ENCODE measurements at regions of chr16 and their contacts with region 1.

Region 1: GRCh38 chr16:26598061-26598460 is 468.7 kb upstream of the C16orf82 start:
- DNase-seq: peak; percentile 86
- H3K4me3 Mint-ChIP-seq: peak overlapping the region; percentile 17
- H3K27ac Mint-ChIP-seq: peak overlapping the region; percentile 82
- H3K4me1 Mint-ChIP-seq: peaks cover 48% of the 10 kb centered on the region
- H3K27me3 Mint-ChIP-seq: peaks cover 17% of the 10 kb centered on the region

Region 2: GRCh38 chr16:26614237-26614841 is 16.3 kb after region 1 on chr16:
- CTCF ChIA-PET with region 1: no interaction called
- intact Hi-C with region 1: loop called (anchors 2 kb)
- DNase-seq: no peak
- H3K4me3 Mint-ChIP-seq: peak overlapping the region; percentile 11
- H3K27ac Mint-ChIP-seq: peak overlapping the region; percentile 33
- H3K4me1 Mint-ChIP-seq: peaks cover 10% of the 10 kb centered on the region
- H3K27me3 Mint-ChIP-seq: peaks cover 19% of the 10 kb centered on the region

Region 3: DNA sequence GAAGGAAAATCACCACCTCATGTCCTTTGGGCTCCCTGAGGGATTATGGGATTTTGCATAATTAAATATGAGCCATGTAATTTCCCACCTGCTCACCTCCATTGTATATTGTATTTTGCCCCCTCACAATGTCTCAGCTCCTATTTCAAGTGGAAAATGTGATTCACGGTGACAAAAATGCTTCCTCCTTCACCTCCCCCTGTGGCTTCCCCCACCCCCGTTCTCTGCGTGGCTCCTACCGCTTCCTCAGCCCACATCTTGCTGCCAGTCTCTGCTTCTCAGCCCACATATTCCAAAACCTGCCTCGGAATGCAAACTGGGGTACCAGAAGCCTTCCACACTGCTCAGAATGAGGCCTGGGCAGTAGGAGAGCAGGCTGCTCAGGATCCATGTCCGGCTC is 74.1 kb after region 1 on chr16:
- CTCF ChIA-PET with region 1: no interaction called
- intact Hi-C with region 1: loop called (anchors 2 kb)
- DNase-seq: peak; percentile 71
- H3K4me3 Mint-ChIP-seq: no peak overlapping the region
- H3K27ac Mint-ChIP-seq: peak overlapping the region; percentile 76
- H3K4me1 Mint-ChIP-seq: peaks cover 27% of the 10 kb centered on the region
- H3K27me3 Mint-ChIP-seq: no peaks in the 10 kb centered on the region

Region 4: GRCh38 chr16:27401768-27402568 is 803.9 kb after region 1 on chr16 and contains the start of gene IL21R:
- CTCF ChIA-PET with region 1: no interaction called
- intact Hi-C with region 1: loop called (anchors 1 kb)
- DNase-seq: peak; percentile 93
- H3K4me3 Mint-ChIP-seq: peak within 1 kb of the TSS; percentile 98
- H3K27ac Mint-ChIP-seq: peak within 1 kb of the TSS; percentile 100
- H3K4me1 Mint-ChIP-seq: peaks cover 43% of the 10 kb centered on the region
- H3K27me3 Mint-ChIP-seq: no peaks in the 10 kb centered on the region
- total RNA-seq, gene IL21R: 93.8 to 99.2 TPM